Heart left ventricle (tissue), 16 donors: ENCODE measurements at regions of chr5 and their contacts with region 1.

Region 1: DNA sequence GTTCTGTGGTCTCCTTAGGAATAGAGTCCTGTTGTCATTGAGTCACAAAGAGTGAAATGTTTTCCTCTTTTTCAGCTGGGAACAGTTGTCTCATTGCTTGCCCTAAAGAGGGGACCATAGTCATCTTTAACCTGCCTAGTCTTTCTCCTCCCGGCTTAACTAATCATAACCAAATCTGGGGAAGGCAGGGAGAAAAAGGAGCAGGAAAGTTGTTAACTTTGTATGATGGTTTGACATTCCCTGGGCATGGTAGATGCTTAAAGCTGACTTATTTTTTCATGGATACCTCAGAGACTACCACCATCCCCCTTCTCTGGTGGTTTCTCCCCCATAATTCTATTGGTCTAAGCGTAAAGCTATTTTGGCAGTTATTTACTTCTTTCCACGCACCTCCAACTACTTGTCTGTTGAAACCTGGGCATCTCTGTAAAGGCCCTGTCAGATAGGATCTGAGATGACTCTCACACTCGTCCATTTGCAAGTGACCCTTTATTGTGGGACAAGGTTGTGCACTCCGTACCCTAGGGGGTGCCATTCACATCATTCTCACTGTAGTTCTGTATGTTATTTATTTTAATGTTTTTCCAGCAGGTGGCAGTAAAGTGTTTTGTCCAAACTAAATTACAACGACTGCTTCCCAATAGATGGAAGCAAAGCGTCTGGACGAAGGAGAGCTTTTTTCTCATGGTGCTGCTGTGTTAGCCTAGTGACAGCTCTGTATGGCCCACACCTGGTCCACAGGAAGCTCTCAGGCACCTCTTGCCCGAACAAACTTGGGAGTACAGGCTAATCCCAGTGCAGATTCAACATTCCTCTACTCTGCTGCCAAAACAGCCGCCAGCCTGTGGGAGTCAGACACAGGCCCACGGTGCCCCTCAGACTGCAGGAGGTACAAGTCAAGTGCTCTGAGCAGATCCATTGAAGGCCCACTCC is 3.0 kb upstream of the FAM13B start:
- DNase-seq: peak in 4 of 5 donors; percentile 48 to 65 (median 62)
- ATAC-seq: peak; percentile 50 to 70 (median 60)
- H3K4me3 ChIP-seq: no peak overlapping the region
- H3K27ac ChIP-seq: peak overlapping the region in 5 of 12 donors; percentile 23 to 55 (median 48)
- H3K4me1 ChIP-seq: peaks cover 0 to 38% (median 19%) of the 10 kb centered on the region in 12 donors
- H3K27me3 ChIP-seq: no peaks in the 10 kb centered on the region
- CTCF ChIP-seq: peak; percentile 70 to 95 (median 84)
- POLR2A ChIP-seq: no peak

Region 2: GRCh38 chr5:137516341-137516740 is 519.5 kb before region 1 on chr5:
- intact Hi-C with region 1: no loop called
- DNase-seq: peak in 1 of 5 donors; percentile 18
- ATAC-seq: no peak
- H3K4me3 ChIP-seq: no peak overlapping the region
- H3K27ac ChIP-seq: no peak overlapping the region
- H3K4me1 ChIP-seq: no peaks in the 10 kb centered on the region
- H3K27me3 ChIP-seq: peaks cover 0 to 5% (median 0%) of the 10 kb centered on the region in 9 donors
- CTCF ChIP-seq: no peak
- POLR2A ChIP-seq: no peak

Region 3: GRCh38 chr5:137754126-137754960 is 281.5 kb before region 1 on chr5 and contains the start of gene HNRNPA0:
- intact Hi-C with region 1: loop called in 1 of 10 experiments (anchors 10 kb)
- DNase-seq: peak; percentile 96 to 98 (median 97)
- ATAC-seq: peak; percentile 93 to 98 (median 96)
- H3K4me3 ChIP-seq: peak within 1 kb of the TSS; percentile 58 to 97 (median 82)
- H3K27ac ChIP-seq: peak within 1 kb of the TSS; percentile 94 to 100 (median 99)
- H3K4me1 ChIP-seq: peaks cover 2 to 37% (median 23%) of the 10 kb centered on the region in 12 donors
- H3K27me3 ChIP-seq: no peaks in the 10 kb centered on the region
- CTCF ChIP-seq: peak in 3 of 12 donors; percentile 8 to 22 (median 18)
- POLR2A ChIP-seq: peak; percentile 68 to 97
- total RNA-seq, gene HNRNPA0: 4.0 to 21.0 (median 14.2) TPM

Region 4: DNA sequence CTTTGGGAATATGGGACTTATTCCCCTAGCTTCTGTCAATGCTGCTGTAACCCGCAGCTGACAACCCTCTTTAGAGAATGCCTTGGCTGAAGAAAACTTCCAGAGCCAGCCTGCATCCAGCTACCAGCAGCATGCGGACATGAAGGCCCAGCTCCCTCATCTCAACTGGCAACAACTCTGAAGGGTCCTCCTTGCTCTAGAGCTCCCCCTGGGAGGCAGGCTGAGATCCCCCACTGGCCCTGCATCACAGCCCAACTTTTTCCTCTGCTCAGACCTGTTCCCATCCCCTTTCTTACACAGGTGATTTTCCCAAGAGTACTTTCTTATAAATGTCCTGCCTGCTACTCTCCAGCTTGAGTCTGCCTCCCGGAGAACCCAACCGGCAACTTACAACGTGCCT is 29.2 kb after region 1 on chr5:
- intact Hi-C with region 1: loop called in 9 of 10 experiments (anchors 1 to 5 kb)
- DNase-seq: no peak
- ATAC-seq: no peak
- H3K4me3 ChIP-seq: no peak overlapping the region
- H3K27ac ChIP-seq: no peak overlapping the region
- H3K4me1 ChIP-seq: no peaks in the 10 kb centered on the region
- H3K27me3 ChIP-seq: no peaks in the 10 kb centered on the region
- CTCF ChIP-seq: peak in 4 of 12 donors; percentile 10 to 24 (median 19)
- POLR2A ChIP-seq: no peak

Region 5: GRCh38 chr5:138128334-138128733 is 92.5 kb after region 1 on chr5:
- intact Hi-C with region 1: loop called in 6 of 10 experiments (anchors 2 to 10 kb)
- DNase-seq: no peak
- ATAC-seq: no peak
- H3K4me3 ChIP-seq: no peak overlapping the region
- H3K27ac ChIP-seq: no peak overlapping the region
- H3K4me1 ChIP-seq: no peaks in the 10 kb centered on the region
- H3K27me3 ChIP-seq: no peaks in the 10 kb centered on the region
- CTCF ChIP-seq: no peak
- POLR2A ChIP-seq: no peak